B cell (primary cell): ENCODE measurements at regions of chr5 and their contacts with region 1.

Region 1: GRCh38 chr5:10577371-10578292 is 13.8 kb downstream of the ANKRD33B start:
- DNase-seq: peak; percentile 12
- ATAC-seq: no peak
- H3K4me3 ChIP-seq: no peak overlapping the region
- H3K4me3 Mint-ChIP-seq: peak overlapping the region; percentile 52
- H3K27ac ChIP-seq: no peak overlapping the region
- H3K27ac Mint-ChIP-seq: peak overlapping the region; percentile 64
- H3K4me1 ChIP-seq: peaks cover 59 to 60% of the 10 kb centered on the region in 2 donors
- H3K4me1 Mint-ChIP-seq: peaks cover 81% of the 10 kb centered on the region
- H3K27me3 ChIP-seq: no peaks in the 10 kb centered on the region
- H3K27me3 Mint-ChIP-seq: no peaks in the 10 kb centered on the region
- CTCF ChIP-seq: no peak

Region 2: GRCh38 chr5:10441083-10441991 is 136.3 kb before region 1 on chr5 and contains the start of gene ROPN1L:
- CTCF ChIA-PET with region 1: no interaction called
- POLR2A ChIA-PET with region 1: no interaction called
- intact Hi-C with region 1: loop called (anchors 1 kb)
- DNase-seq: peak; percentile 86
- ATAC-seq: peak; percentile 95
- H3K4me3 ChIP-seq: peak within 1 kb of the TSS; percentile 66 to 85 (median 70)
- H3K4me3 Mint-ChIP-seq: peak within 1 kb of the TSS; percentile 93
- H3K27ac ChIP-seq: no peak within 1 kb of the TSS
- H3K27ac Mint-ChIP-seq: peak within 1 kb of the TSS; percentile 59
- H3K4me1 ChIP-seq: peaks cover 27 to 41% of the 10 kb centered on the region in 2 donors
- H3K4me1 Mint-ChIP-seq: peaks cover 35% of the 10 kb centered on the region
- H3K27me3 ChIP-seq: peaks cover 0 to 5% (median 0%) of the 10 kb centered on the region in 4 experiments
- H3K27me3 Mint-ChIP-seq: peaks cover 4% of the 10 kb centered on the region
- CTCF ChIP-seq: no peak
- total RNA-seq, gene ROPN1L: 0.34 and 0.91 TPM in 2 replicates

Region 3: GRCh38 chr5:10607666-10608073 is 30.0 kb after region 1 on chr5:
- CTCF ChIA-PET with region 1: interaction called, 3 read pairs
- POLR2A ChIA-PET with region 1: interaction called, 8 read pairs
- intact Hi-C with region 1: loop called (anchors 1 kb)
- DNase-seq: peak; percentile 76
- ATAC-seq: peak; percentile 26
- H3K4me3 ChIP-seq: peak overlapping the region in 4 of 5 experiments; percentile 23 to 59 (median 40)
- H3K4me3 Mint-ChIP-seq: peak overlapping the region; percentile 82
- H3K27ac ChIP-seq: peak overlapping the region; percentile 45 to 73
- H3K27ac Mint-ChIP-seq: peak overlapping the region; percentile 86
- H3K4me1 ChIP-seq: peaks cover 25 to 30% of the 10 kb centered on the region in 2 donors
- H3K4me1 Mint-ChIP-seq: peaks cover 49% of the 10 kb centered on the region
- H3K27me3 ChIP-seq: no peaks in the 10 kb centered on the region
- H3K27me3 Mint-ChIP-seq: no peaks in the 10 kb centered on the region
- CTCF ChIP-seq: no peak

Region 4: GRCh38 chr5:10921160-10921559 is 343.5 kb after region 1 on chr5:
- CTCF ChIA-PET with region 1: no interaction called
- POLR2A ChIA-PET with region 1: no interaction called
- intact Hi-C with region 1: no loop called
- DNase-seq: no peak
- ATAC-seq: no peak
- H3K4me3 ChIP-seq: no peak overlapping the region
- H3K4me3 Mint-ChIP-seq: no peak overlapping the region
- H3K27ac ChIP-seq: no peak overlapping the region
- H3K27ac Mint-ChIP-seq: no peak overlapping the region
- H3K4me1 ChIP-seq: no peaks in the 10 kb centered on the region
- H3K4me1 Mint-ChIP-seq: no peaks in the 10 kb centered on the region
- H3K27me3 ChIP-seq: no peaks in the 10 kb centered on the region
- H3K27me3 Mint-ChIP-seq: peaks cover 13% of the 10 kb centered on the region
- CTCF ChIP-seq: no peak